Naive thymus-derived CD8-positive, alpha-beta T cell (primary cell): ENCODE measurements at regions of chr15 and their contacts with region 1.

Region 1: DNA sequence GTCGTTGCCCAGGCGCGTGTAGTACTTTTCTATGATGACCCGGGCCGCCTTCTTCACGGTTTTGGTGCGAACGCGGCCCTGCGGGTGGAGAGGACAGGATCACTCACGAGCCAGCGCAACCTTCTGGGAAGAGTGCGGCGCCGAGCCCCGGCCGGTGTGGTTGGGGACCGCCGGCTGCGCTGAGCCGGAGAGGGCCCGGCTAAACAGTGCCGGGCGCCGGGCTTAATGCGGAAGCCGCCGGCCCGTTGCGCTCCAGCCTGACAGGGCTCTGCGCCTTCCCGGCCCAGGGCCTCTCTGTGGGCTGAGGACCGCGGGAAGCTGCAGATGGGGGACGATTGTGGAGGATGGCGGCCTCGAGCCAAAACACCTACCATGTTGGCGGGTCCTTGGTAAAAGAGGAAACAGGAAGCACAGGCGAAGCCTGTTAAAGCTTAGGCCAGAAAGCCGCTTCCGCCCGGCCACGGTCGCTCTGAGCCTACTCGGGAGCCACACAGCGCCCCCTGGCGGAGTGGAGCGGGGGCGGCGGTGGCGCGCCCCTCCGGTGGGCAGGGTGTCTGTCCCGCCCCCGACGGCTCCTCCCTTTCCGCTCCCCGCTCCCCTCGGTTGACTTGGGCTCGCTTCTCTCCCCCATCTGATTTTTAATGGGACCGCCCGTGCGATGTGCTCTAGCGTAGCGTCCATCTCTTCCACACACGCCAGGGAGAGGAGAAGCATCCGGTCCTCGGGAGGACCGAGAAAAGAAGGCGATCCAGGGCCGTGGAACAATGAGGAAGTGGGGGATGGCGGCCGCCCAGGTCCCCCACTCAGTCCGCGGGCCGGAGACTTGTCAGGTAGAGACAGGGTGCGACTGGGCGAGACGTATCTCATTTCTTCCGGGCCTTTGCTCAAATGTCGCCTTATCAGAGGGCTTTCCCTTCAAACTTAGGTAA is at the start of gene RPS17:
- DNase-seq: peak; percentile 96 to 100 (median 99)
- ATAC-seq: peak; percentile 89 to 94
- H3K4me3 Mint-ChIP-seq: peak within 1 kb of the TSS; percentile 93 to 97 (median 97)
- H3K27ac Mint-ChIP-seq: peak within 1 kb of the TSS; percentile 95 to 99 (median 97)
- H3K4me1 Mint-ChIP-seq: peaks cover 12 to 42% (median 30%) of the 10 kb centered on the region in 4 donors
- H3K27me3 Mint-ChIP-seq: no peaks in the 10 kb centered on the region
- polyA plus RNA-seq, gene RPS17: 1,585 to 2,201 (median 1,988) TPM

Region 2: DNA sequence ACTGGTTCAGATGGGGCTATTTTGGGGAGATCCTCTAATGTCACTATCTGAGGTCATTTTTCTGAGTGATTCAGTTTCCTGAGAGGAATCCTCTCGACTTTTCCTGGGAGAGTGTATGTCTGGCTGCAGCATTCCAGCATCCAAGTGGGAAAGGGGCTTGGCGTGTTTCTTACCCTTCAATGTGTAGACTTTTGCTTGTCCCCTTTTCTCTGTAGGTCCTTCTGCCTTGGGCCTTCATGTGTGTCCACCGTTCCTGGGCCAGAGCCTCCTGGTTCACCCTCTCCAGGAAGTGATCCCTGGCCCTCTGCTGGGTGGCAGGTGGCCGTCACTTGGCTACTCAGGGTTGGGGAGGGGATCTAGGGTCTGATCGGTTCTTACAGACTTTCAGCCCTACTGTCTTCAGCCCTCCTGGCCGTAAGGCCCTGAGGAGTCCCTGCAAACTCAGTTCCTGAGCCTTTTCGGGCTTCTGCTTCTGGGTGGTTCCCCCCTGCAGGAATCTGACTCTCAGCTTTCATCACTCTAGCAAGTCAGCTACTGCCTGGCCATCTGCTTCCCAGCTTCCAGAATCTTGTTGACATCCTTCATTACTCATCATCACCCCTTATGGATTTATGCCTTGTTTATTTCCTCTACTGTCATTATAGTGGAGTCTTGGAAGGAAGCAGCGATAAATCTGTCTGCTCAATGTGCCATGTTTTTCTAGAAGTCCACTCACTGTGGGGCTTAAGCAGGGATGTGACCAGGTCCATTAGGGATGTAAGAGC is 227.6 kb before region 1 on chr15:
- POLR2A ChIA-PET with region 1: no interaction called
- DNase-seq: no peak
- ATAC-seq: no peak
- H3K4me3 Mint-ChIP-seq: no peak overlapping the region
- H3K27ac Mint-ChIP-seq: no peak overlapping the region
- H3K4me1 Mint-ChIP-seq: peaks cover 0 to 2% (median 0%) of the 10 kb centered on the region in 4 donors
- H3K27me3 Mint-ChIP-seq: no peaks in the 10 kb centered on the region

Region 3: DNA sequence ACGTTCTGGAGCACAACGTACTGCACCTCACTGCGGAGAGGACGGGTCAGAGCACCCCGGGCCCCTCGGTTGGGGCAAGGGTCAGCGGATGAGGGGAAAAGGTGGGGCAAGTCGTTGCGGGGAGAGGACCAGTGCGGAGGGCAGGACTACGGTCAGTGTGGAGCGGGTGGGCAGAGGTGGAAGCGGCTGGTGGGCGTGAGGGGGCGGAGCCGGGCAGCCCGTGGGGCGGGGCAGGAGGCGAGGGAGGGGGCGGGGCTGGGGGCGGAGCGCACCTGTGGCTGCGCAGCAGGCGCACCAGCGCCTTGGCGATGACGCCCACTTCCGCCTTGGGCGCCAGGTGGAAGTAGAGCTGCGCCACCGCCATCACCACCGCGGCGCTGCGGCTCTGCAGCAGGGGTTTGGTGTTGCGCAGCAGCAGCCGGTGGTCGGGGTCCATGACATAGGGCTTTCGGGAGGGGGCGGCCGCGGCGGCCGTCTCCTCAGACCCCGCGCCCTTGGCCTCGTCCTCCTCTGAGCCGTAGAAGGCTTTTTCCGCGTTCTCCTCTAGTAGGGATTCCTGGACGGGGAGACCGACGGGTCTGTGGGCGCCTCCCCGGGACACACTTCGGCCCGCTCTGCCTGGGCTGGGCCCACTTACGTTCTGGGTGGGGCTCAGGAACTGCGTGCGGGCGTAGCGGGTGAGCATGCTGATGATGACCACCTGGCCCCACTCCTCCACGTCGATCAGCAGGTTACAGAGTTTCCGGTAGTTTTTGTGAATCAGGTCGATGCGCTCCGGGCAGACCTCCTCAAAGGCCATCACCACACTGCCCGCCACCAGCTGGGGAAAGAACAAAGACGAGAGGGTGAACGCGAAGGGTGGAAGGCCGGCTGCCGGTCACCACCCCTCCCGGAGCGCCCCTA is 140.1 kb after region 1 on chr15:
- POLR2A ChIA-PET with region 1: interaction called, 27 read pairs
- DNase-seq: peak; percentile 71 to 91 (median 84)
- ATAC-seq: peak; percentile 97
- H3K4me3 Mint-ChIP-seq: peak overlapping the region; percentile 89 to 97 (median 92)
- H3K27ac Mint-ChIP-seq: peak overlapping the region; percentile 88 to 99 (median 97)
- H3K4me1 Mint-ChIP-seq: peaks cover 7 to 18% (median 14%) of the 10 kb centered on the region in 4 donors
- H3K27me3 Mint-ChIP-seq: peaks cover 0 to 9% (median 0%) of the 10 kb centered on the region in 5 donors

Region 4: DNA sequence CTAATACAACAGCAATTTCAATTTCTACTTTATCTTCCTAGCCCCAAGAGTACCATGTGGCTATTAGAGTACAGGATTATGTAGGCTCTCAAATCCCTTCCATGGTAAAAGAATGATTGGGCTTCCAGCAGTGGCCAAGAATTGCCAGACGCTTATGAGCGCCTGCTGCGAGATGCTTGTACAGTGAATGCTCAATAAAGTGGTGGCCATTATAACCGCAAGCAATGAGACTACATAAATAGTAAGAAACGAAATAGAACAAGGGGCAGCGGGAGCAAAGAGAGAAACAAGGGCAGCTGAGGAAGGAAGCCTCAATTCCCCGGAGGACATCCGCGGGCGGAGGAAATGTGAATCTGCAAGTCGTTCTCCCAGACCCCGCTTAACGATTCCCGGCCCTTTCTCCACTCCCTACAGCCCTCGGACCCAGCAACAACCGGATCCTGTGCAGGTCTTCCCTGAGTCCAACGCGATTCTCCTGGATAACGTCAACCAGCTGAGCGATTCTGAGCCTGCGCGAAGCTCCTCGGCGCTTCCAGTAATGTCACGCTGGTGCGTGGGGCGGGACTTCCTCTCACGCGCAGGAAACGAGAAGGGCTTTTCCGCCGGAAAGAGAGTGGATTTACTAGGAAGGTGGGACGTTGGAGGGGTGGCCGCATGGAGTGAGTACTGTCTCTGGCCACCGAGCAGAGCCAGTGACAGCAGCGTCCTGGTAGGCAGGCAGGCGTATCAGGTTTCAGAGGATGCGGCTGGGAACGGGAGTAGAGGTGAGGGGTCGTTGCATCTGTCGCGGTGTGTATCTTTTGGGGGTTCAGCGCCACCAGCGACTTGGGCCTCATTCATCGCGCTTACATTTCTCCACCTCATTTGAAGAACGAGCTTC is 209.9 kb after region 1 on chr15:
- POLR2A ChIA-PET with region 1: interaction called, 15 read pairs
- DNase-seq: peak; percentile 66 to 88 (median 74)
- ATAC-seq: peak; percentile 97 to 98
- H3K4me3 Mint-ChIP-seq: peak overlapping the region; percentile 89 to 100 (median 100)
- H3K27ac Mint-ChIP-seq: peak overlapping the region; percentile 95 to 99 (median 98)
- H3K4me1 Mint-ChIP-seq: peaks cover 29 to 57% (median 52%) of the 10 kb centered on the region in 4 donors
- H3K27me3 Mint-ChIP-seq: no peaks in the 10 kb centered on the region

Region 5: DNA sequence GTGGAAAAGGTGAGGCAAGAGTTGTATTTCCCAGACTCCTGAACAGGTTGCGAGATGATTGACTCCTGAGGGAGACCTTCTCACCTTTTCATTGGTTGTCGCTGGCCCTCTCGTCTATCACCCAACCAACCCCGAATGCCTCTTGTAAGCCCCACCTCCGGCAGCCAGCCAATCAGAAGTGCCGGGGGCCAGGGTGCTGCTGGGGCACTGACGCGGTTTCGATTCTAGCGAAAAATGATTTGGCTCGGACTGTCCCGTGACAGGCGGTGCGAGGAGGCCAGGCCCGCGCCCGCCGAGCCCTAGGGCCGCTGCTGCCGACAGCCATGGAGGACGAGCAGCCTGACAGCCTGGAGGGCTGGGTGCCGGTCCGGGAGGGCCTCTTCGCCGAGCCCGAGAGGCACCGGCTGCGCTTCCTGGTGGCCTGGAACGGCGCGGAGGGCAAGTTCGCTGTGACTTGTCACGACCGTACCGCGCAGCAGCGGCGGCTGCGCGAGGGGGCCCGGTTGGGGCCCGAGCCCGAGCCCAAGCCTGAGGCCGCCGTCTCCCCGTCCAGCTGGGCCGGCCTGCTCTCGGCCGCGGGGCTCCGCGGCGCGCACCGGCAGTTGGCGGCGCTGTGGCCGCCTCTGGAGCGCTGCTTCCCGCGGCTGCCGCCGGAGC is 269.2 kb after region 1 on chr15 and contains the start of gene WHAMM:
- POLR2A ChIA-PET with region 1: interaction called, 23 read pairs
- DNase-seq: peak; percentile 86 to 98 (median 95)
- ATAC-seq: peak; percentile 93 to 94
- H3K4me3 Mint-ChIP-seq: peak within 1 kb of the TSS; percentile 83 to 99 (median 94)
- H3K27ac Mint-ChIP-seq: peak within 1 kb of the TSS; percentile 95 to 100 (median 96)
- H3K4me1 Mint-ChIP-seq: peaks cover 15 to 51% (median 36%) of the 10 kb centered on the region in 4 donors
- H3K27me3 Mint-ChIP-seq: no peaks in the 10 kb centered on the region
- polyA plus RNA-seq, gene WHAMM: 3.7 to 5.8 (median 4.5) TPM

Region 6: GRCh38 chr15:82985688-82986441 is 445.5 kb after region 1 on chr15 and contains the start of gene RAMAC:
- POLR2A ChIA-PET with region 1: interaction called, 31 read pairs
- DNase-seq: peak; percentile 83 to 99 (median 92)
- ATAC-seq: peak; percentile 94
- H3K4me3 Mint-ChIP-seq: peak within 1 kb of the TSS; percentile 95 to 99 (median 99)
- H3K27ac Mint-ChIP-seq: peak within 1 kb of the TSS; percentile 89 to 99 (median 97)
- H3K4me1 Mint-ChIP-seq: peaks cover 9 to 35% (median 25%) of the 10 kb centered on the region in 4 donors
- H3K27me3 Mint-ChIP-seq: no peaks in the 10 kb centered on the region
- polyA plus RNA-seq, gene RAMAC: 28.5 to 35.0 (median 31.7) TPM

Region 7: GRCh38 chr15:83011271-83012075 is 471.2 kb after region 1 on chr15 and contains the start of gene C15orf40:
- POLR2A ChIA-PET with region 1: interaction called, 27 read pairs
- DNase-seq: peak; percentile 69 to 88 (median 81)
- ATAC-seq: peak; percentile 79 to 86
- H3K4me3 Mint-ChIP-seq: peak within 1 kb of the TSS; percentile 86 to 100 (median 98)
- H3K27ac Mint-ChIP-seq: peak within 1 kb of the TSS; percentile 87 to 96 (median 92)
- H3K4me1 Mint-ChIP-seq: peaks cover 36 to 57% (median 49%) of the 10 kb centered on the region in 4 donors
- H3K27me3 Mint-ChIP-seq: no peaks in the 10 kb centered on the region
- polyA plus RNA-seq, gene C15orf40: 56.2 to 87.5 (median 67.8) TPM